SK-N-SH (cell line): ENCODE measurements at regions of chr12 and their contacts with region 1.

Region 1: DNA sequence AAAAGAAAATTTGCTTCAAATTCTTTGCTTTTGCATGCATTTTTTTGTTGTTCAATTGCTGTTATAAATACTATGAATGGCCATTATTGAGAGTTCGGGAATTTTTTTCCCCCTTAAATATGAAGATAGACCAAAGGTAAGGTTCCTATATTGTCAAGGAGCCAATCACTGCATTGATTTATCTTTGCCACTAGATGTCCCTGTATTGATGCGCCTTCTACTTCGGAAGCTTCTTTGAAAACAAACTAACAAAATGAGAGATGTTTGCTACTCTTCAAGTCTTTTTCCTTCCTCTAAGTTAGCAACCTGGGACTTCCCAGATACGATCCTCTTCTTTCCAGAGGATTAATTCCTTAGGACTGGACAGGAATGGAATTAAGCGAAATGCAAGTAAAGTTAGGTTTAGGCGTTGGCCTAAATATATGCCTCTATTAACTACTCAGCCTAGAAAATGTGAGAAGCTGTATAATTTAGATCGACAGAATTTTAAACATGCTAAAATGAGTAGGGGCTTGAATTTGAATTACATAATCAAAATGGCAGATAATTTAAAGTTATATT is 318.1 kb downstream of the AEBP2 start:
- DNase-seq: peak; percentile 31
- H3K4me3 ChIP-seq: no peak overlapping the region
- H3K27ac ChIP-seq: peak overlapping the region in 1 of 2 experiments; percentile 55; a peak in 1 of 4 replicates
- H3K4me1 ChIP-seq: no peaks in the 10 kb centered on the region; a peak in 2 of 4 replicates
- H3K27me3 ChIP-seq: no peaks in the 10 kb centered on the region
- CTCF ChIP-seq: peak; percentile 79
- EP300 ChIP-seq: no peak
- RAD21 ChIP-seq: peak; percentile 87

Region 2: DNA sequence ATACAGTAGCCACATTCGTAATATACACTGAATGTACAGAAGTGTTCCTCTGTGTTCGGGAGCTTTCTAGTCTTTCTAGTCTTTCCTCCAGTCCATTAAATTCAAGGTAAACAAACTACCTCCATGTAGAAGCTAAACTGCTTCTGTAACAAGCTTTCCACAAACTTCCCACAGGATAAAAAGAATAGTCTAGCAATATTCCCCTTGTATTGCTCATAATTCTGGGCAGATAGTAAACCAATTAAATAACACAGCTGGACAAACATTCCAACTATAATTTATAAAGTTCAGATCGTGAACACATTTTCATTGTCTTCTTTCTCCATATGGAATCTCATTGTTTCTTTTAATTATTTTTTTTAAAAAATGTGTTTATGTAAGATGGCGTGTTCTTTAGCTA is 10.9 kb before region 1 on chr12:
- CTCF ChIA-PET with region 1: interaction called, 10 read pairs
- POLR2A ChIA-PET with region 1: no interaction called
- DNase-seq: no peak
- H3K4me3 ChIP-seq: no peak overlapping the region
- H3K27ac ChIP-seq: no peak overlapping the region
- H3K4me1 ChIP-seq: no peaks in the 10 kb centered on the region
- H3K27me3 ChIP-seq: no peaks in the 10 kb centered on the region
- CTCF ChIP-seq: no peak
- EP300 ChIP-seq: no peak
- RAD21 ChIP-seq: no peak

Region 3: GRCh38 chr12:20150835-20151422 is 393.5 kb after region 1 on chr12:
- CTCF ChIA-PET with region 1: no interaction called
- POLR2A ChIA-PET with region 1: no interaction called
- DNase-seq: peak; percentile 2
- H3K4me3 ChIP-seq: no peak overlapping the region
- H3K27ac ChIP-seq: no peak overlapping the region
- H3K4me1 ChIP-seq: peaks cover 0 to 5% of the 10 kb centered on the region in 2 experiments; a peak in 1 of 4 replicates
- H3K27me3 ChIP-seq: no peaks in the 10 kb centered on the region
- CTCF ChIP-seq: no peak
- EP300 ChIP-seq: no peak
- RAD21 ChIP-seq: no peak

Region 4: DNA sequence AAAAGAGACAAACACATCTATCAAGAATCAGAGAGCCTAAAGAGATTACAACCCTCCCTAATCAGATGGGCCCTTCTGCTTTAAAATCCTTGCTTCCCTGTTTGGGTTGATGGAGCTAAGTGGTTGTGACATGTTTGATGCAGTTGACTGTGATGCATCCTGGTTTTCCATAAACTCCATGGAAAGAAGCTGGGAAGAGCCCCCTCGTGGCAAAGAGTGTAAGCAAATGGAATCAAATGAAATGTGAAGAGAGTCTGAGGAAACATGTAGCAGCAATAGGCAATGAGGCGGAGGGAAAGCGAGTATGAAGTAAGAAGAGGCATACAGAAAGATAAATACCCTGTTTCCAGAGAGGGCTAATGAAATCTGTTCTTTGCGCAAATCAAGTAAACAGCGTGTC is 867.3 kb after region 1 on chr12:
- CTCF ChIA-PET with region 1: interaction called, 11 read pairs
- POLR2A ChIA-PET with region 1: no interaction called
- DNase-seq: peak; percentile 19
- H3K4me3 ChIP-seq: no peak overlapping the region
- H3K27ac ChIP-seq: no peak overlapping the region
- H3K4me1 ChIP-seq: peaks cover 4 to 5% of the 10 kb centered on the region in 2 experiments; a peak in 3 of 4 replicates
- H3K27me3 ChIP-seq: no peaks in the 10 kb centered on the region
- CTCF ChIP-seq: peak; percentile 60
- EP300 ChIP-seq: no peak
- RAD21 ChIP-seq: peak; percentile 64